ENCODE measurements at regions of chr10 and their contacts with region 1.

Region 1: DNA sequence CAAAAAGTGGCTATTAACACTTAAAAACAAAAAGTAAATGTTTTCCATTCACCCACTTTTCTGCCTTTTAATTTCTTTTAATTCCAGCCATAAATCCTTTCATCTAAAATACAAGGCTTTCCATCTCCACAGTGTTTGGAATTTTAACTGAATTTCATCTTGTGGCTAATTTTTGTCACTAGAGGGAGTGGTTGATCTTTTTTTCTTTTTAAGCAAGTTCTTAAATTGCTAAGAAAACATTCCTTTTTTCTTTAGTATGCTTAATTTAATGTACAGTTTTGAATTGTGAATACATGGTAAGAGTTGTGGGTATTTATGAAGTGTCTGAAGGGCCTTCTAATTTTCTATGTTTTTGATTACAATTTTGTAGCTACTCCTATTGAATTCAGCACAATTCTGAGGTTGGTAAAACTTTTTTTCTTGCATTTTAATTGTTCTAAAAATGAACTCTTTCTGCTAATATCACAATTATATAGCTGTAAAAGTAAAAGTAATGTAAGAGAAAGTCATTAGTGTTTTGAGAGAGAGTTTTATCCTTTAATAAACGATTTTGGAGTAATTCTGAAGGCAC is 54.9 kb upstream of the ANK3 start:
- DNase-seq: no peak
- H3K4me3 ChIP-seq: no peak overlapping the region
- H3K27ac ChIP-seq: no peak overlapping the region
- H3K4me1 ChIP-seq: no peaks in the 10 kb centered on the region
- H3K27me3 ChIP-seq: no peaks in the 10 kb centered on the region
- CTCF ChIP-seq: peak; percentile 29 to 52 (median 33)
- POLR2A ChIP-seq: no peak

Region 2: GRCh38 chr10:60291344-60291930 is 153.1 kb before region 1 on chr10:
- intact Hi-C with region 1: no loop called
- DNase-seq: no peak
- H3K4me3 ChIP-seq: no peak overlapping the region
- H3K27ac ChIP-seq: no peak overlapping the region
- H3K4me1 ChIP-seq: no peaks in the 10 kb centered on the region
- H3K27me3 ChIP-seq: no peaks in the 10 kb centered on the region
- CTCF ChIP-seq: no peak
- POLR2A ChIP-seq: no peak

Region 3: GRCh38 chr10:60646966-60647796 is 202.6 kb after region 1 on chr10:
- intact Hi-C with region 1: loop called (anchors 10 kb)
- DNase-seq: peak; percentile 57
- H3K4me3 ChIP-seq: no peak overlapping the region
- H3K27ac ChIP-seq: no peak overlapping the region
- H3K4me1 ChIP-seq: peaks cover 9% of the 10 kb centered on the region
- H3K27me3 ChIP-seq: no peaks in the 10 kb centered on the region
- CTCF ChIP-seq: peak; percentile 62 to 78 (median 74)
- POLR2A ChIP-seq: no peak

Region 4: DNA sequence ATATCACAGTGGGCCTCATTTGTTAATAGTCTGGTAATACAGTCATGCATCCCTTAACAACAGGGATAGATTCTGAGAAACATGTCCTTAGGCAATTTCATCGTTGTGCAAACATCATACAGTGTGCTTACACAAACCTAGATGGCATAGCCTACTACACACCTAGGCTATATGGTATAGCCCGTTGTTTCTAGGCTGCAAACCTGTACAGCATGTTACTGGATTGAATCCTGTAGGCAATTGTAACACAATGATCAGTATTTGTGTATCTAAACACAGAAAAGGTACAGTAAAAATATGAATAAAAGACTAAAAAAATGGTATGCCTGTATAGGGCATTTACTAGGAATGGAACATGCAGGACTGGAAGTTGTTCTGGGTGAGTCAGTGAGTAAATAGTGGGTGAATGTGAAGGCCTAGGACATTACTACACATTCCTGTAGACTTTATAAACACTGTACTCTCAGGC is 511.4 kb after region 1 on chr10:
- intact Hi-C with region 1: no loop called
- DNase-seq: no peak
- H3K4me3 ChIP-seq: no peak overlapping the region
- H3K27ac ChIP-seq: no peak overlapping the region
- H3K4me1 ChIP-seq: no peaks in the 10 kb centered on the region
- H3K27me3 ChIP-seq: no peaks in the 10 kb centered on the region
- CTCF ChIP-seq: no peak
- POLR2A ChIP-seq: no peak